ENCODE measurements at regions of chr13 and their contacts with region 1.

Region 1: DNA sequence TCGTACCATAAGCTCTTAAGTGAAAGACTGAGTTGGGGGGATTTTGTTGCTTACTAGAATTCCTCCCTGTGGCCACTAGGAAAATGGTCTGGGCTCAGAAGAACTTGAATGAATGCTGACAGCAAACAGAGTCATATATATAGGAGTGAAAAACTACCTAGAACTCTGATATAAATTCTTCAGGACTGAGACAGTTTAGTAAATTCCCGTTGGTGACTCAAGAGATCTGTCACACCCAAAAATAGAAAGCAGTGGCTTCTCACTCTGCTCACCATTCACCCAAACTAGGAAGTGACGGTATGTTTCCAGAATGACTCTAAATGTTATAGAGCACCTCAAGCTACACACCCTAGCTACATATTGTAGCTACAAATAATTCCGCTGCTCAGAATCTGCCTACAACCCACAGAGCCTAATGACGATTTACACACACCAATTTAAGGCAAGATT is 116.2 kb downstream of the TBC1D4 start:
- DNase-seq: peak; percentile 41
- ATAC-seq: peak; percentile 93
- H3K4me3 Mint-ChIP-seq: peak overlapping the region; percentile 24
- H3K27ac Mint-ChIP-seq: peak overlapping the region; percentile 79
- H3K4me1 Mint-ChIP-seq: peaks cover 44% of the 10 kb centered on the region
- H3K27me3 Mint-ChIP-seq: no peaks in the 10 kb centered on the region

Region 2: DNA sequence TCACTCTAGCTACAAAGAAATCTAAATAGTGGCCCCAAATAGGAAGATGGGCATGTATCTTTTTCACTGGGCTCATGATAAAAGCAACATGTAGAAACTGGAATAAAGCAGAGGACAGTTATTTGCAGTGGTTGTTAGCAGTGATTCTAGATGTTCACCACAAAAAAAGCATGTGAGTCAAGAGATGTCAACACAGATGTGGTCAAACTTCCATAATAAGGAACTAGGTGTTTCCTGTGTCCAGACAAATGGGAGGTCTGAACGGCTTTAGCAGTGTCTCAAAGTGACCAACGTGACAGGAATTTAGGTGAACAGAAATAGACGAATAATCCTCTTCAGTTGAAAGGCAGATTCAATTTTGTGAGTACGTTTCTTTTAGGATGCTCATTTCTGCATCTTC is 46.5 kb before region 1 on chr13:
- CTCF ChIA-PET with region 1: no interaction called
- POLR2A ChIA-PET with region 1: no interaction called
- intact Hi-C with region 1: loop called in 1 of 2 experiments (anchors 2 kb)
- DNase-seq: no peak
- ATAC-seq: no peak
- H3K4me3 Mint-ChIP-seq: peak overlapping the region; percentile 10
- H3K27ac Mint-ChIP-seq: peak overlapping the region; percentile 95
- H3K4me1 Mint-ChIP-seq: peaks cover 69% of the 10 kb centered on the region
- H3K27me3 Mint-ChIP-seq: no peaks in the 10 kb centered on the region

Region 3: DNA sequence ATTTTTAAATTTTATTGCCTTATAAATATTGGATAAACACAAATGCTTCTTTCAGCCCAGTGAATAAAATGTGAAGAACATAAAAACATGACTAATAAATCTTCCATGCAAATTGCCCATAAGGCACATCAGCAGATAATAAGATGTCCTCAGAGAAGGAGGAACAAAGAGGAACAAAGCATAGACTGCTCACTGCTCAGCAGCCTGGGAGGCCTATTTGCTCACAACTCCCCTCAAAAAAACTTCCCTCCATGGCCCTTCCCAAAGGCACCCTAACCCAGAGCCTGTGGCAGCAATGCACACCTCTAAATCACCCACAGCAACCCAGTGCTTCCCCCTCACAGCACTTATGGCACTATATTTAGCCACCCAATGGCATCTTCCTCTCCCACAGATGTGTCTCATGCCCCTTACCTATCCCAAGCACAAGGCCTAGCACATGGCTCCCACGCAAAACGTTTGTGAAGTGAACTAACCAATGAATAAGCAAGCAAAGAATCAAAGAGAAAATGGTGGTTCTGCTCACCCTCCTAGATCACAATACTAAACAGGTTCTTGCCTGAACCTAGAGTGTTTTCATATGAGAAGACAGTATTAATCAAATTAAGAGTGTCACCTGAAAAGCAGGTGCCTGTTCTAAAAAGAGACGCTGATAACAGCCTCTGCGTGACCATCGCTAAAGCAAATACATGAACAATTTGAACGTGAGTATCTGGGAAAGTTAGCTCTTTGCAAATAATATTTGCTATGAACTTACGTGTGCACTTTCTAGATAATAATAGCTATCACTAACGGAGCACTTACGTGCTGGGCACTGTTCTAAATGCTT is 19.3 kb after region 1 on chr13:
- CTCF ChIA-PET with region 1: interaction called, 3 read pairs
- POLR2A ChIA-PET with region 1: no interaction called
- intact Hi-C with region 1: loop called in 1 of 2 experiments (anchors 2 kb)
- DNase-seq: no peak
- ATAC-seq: no peak
- H3K4me3 Mint-ChIP-seq: no peak overlapping the region
- H3K27ac Mint-ChIP-seq: no peak overlapping the region
- H3K4me1 Mint-ChIP-seq: peaks cover 16% of the 10 kb centered on the region
- H3K27me3 Mint-ChIP-seq: peaks cover 3% of the 10 kb centered on the region

Region 4: GRCh38 chr13:75495938-75496337 is 130.2 kb after region 1 on chr13:
- CTCF ChIA-PET with region 1: no interaction called
- POLR2A ChIA-PET with region 1: no interaction called
- intact Hi-C with region 1: no loop called
- DNase-seq: no peak
- ATAC-seq: no peak
- H3K4me3 Mint-ChIP-seq: no peak overlapping the region
- H3K27ac Mint-ChIP-seq: no peak overlapping the region
- H3K4me1 Mint-ChIP-seq: no peaks in the 10 kb centered on the region
- H3K27me3 Mint-ChIP-seq: peaks cover 19% of the 10 kb centered on the region

Region 5: GRCh38 chr13:75537401-75538365 is 171.9 kb after region 1 on chr13 and contains the start of gene COMMD6:
- CTCF ChIA-PET with region 1: no interaction called
- POLR2A ChIA-PET with region 1: no interaction called
- intact Hi-C with region 1: loop called in 1 of 2 experiments (anchors 5 kb)
- DNase-seq: peak; percentile 89
- ATAC-seq: peak; percentile 96
- H3K4me3 Mint-ChIP-seq: peak within 1 kb of the TSS; percentile 100
- H3K27ac Mint-ChIP-seq: peak within 1 kb of the TSS; percentile 96
- H3K4me1 Mint-ChIP-seq: peaks cover 46% of the 10 kb centered on the region
- H3K27me3 Mint-ChIP-seq: no peaks in the 10 kb centered on the region
- total RNA-seq, gene COMMD6: 103 to 121 TPM

Region 6: DNA sequence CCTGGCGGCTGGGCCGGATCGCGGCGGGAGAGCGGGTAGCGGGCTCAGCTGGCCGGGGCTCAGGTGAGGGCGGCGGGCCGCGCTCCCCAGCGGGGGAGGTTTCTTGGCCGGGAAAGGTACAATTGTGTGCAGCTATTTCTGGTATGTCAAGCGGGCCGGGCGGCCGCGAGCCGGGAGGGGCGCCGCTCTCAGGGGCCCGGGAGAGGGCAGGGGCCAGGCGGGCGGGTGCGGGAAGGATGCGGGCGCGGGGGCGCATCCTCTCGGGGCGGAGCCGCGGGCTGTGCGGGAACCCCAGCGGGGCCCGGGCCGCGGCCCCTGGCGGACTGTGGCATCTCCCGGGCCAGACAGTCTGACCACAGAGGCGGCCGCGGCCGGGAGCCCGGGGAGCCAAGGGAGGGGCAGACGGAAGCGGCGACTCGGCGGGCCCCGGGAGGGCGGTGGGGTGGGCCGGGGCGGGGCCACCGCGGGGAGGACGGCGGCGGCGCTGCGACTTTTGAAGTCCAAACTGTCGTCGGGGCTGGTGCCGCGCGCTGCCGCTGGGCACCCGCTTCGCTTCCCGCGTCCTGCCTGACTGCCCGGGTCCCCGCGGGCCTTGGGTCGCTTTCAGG is 270.2 kb after region 1 on chr13 and contains the start of gene LMO7:
- CTCF ChIA-PET with region 1: no interaction called
- POLR2A ChIA-PET with region 1: no interaction called
- intact Hi-C with region 1: loop called in 1 of 2 experiments (anchors 5 kb)
- DNase-seq: peak; percentile 63
- ATAC-seq: peak; percentile 49
- H3K4me3 Mint-ChIP-seq: peak within 1 kb of the TSS; percentile 69
- H3K27ac Mint-ChIP-seq: no peak within 1 kb of the TSS
- H3K4me1 Mint-ChIP-seq: peaks cover 13% of the 10 kb centered on the region
- H3K27me3 Mint-ChIP-seq: peaks cover 18% of the 10 kb centered on the region
- total RNA-seq, gene LMO7: 11.7 to 15.5 TPM

Region 7: GRCh38 chr13:75803164-75803611 is 437.4 kb after region 1 on chr13:
- CTCF ChIA-PET with region 1: no interaction called
- POLR2A ChIA-PET with region 1: no interaction called
- intact Hi-C with region 1: loop called in 1 of 2 experiments (anchors 5 kb)
- DNase-seq: peak; percentile 24
- ATAC-seq: peak; percentile 43
- H3K4me3 Mint-ChIP-seq: no peak overlapping the region
- H3K27ac Mint-ChIP-seq: peak overlapping the region; percentile 55
- H3K4me1 Mint-ChIP-seq: peaks cover 55% of the 10 kb centered on the region
- H3K27me3 Mint-ChIP-seq: no peaks in the 10 kb centered on the region